IMR-90 (cell line): ENCODE measurements at regions of chr11 and their contacts with region 1.

Region 1: DNA sequence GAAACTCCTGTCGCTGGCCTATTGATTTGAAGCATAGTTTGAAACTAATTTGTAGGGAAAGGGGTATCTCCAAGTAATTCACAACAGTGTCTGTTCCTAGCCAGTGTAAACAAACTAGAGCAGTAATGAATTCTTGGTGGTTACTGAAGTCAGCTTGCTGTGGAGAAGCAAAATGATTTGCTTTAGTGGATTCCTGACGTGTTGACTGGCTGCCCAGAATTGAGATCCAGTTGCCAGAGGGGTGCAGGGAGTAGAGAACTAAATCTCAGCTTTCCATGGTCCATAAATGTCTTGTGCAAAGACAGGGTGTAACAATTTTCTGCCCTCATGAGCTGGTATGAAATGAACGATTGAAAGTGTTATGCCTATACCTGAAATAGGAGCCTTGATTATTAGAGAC is 382.5 kb upstream of the KIRREL3 start:
- DNase-seq: no peak
- ATAC-seq: no peak
- H3K4me3 ChIP-seq: no peak overlapping the region
- H3K27ac ChIP-seq: no peak overlapping the region
- H3K4me1 ChIP-seq: no peaks in the 10 kb centered on the region
- H3K27me3 ChIP-seq: no peaks in the 10 kb centered on the region
- CTCF ChIP-seq: no peak
- POLR2A ChIP-seq: no peak
- RAD21 ChIP-seq: no peak

Region 2: DNA sequence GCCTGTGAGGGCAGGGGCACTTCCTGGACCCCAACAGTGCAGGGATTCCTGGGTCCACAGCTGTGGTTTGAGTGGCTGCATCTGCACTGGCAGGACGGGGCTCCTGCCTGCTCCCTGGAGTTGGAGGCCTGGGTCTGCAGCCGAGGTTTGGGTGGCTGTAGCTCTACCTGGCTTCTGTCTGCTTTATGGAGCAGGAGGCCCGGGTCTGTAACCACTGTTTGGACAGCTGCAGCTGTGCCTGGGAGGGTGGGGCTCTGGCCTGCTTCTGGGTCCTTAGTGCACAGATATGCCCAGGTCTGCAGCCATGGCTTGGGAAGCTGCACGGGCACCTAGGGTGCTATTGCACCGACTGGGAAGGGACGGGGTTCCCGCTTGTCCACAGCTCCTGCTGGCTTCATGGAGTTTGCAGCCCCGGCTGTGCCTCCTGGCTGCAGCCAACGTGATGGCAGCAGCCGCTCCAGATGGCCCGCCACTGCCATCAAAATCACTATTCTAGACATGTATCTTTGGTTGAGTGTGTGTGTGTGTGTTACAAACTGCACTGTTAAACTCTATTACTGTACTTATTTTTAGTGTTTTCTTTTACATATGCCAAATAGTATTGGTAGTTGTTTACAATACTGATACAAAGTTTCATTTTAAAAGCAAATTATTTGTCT is 29.8 kb after region 1 on chr11:
- CTCF ChIA-PET with region 1: no interaction called
- POLR2A ChIA-PET with region 1: no interaction called
- dilution Hi-C with region 1: no loop called
- in situ Hi-C with region 1: no loop called
- intact Hi-C with region 1: loop called (anchors 1 kb)
- DNase-seq: no peak
- ATAC-seq: no peak
- H3K4me3 ChIP-seq: no peak overlapping the region
- H3K27ac ChIP-seq: no peak overlapping the region
- H3K4me1 ChIP-seq: no peaks in the 10 kb centered on the region
- H3K27me3 ChIP-seq: no peaks in the 10 kb centered on the region
- CTCF ChIP-seq: no peak
- POLR2A ChIP-seq: no peak
- RAD21 ChIP-seq: no peak

Region 3: DNA sequence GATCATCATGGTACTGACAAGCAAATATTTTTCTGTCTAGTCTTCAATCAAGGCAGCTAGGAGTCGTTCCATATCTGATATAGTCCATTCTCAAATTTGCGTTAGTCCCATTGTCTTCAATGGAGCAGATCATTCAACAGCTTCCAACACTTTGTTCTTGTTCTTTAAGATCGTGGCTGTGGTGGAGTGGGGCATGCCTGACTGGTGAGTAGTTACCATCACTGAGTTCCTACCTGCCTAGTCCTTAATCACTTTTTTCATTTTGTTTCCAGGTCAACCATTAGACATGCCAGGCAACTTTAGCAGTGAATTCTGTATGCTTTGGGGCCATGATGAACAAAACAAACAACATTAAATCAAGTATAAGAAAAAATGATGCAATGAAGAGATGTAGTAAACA is 310.7 kb after region 1 on chr11:
- CTCF ChIA-PET with region 1: no interaction called
- POLR2A ChIA-PET with region 1: no interaction called
- dilution Hi-C with region 1: no loop called
- in situ Hi-C with region 1: no loop called
- intact Hi-C with region 1: no loop called
- DNase-seq: no peak
- ATAC-seq: no peak
- H3K4me3 ChIP-seq: no peak overlapping the region
- H3K27ac ChIP-seq: no peak overlapping the region
- H3K4me1 ChIP-seq: no peaks in the 10 kb centered on the region
- H3K27me3 ChIP-seq: no peaks in the 10 kb centered on the region
- CTCF ChIP-seq: no peak
- POLR2A ChIP-seq: no peak
- RAD21 ChIP-seq: no peak